ENCODE measurements at regions of chr22 and their contacts with region 1.

Region 1: DNA sequence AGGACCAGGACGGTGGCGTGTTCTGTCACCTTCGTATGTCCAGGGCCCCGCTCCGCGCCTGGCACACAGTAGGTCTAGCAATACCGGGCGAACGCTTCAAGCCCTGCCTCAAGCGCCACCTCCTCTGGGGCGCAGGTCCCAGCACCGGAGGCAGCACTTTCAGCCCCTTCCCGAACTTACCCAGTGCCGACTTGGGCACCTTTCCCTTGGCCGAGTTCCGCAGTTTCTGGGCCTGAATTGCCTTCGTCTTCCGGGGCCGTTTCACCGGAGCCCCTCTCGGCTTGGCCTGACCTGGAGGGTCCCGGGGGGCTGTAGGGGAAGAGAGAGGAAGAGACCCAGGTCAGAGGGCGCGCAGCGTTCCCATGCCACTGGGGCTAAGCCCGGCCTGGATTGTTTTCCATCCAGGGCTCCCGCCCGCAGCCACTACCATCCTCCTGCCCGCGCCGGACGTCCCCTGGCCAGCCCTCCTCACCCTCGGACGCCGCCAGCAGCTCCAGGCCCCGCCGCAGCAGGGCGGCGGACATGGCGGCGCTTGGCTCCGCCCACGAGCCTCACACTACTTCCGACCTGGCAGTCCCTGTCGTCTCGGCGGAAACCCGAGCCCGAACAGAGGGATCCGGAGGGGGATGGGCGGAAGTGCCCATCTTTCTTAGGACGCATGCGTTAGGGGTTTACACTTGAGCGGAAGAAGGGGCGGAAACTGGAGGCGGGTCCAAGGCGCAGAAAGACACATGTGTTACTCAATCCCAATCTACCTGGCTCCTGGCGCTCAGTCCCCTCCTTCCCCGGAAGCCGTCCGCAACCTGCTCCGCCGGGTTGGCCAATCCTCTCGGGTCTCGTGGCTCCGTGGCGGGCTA is at the start of gene RPS19BP1:
- DNase-seq: peak; percentile 99
- H3K4me3 Mint-ChIP-seq: peak within 1 kb of the TSS; percentile 96
- H3K27ac Mint-ChIP-seq: peak within 1 kb of the TSS; percentile 93
- H3K4me1 Mint-ChIP-seq: peaks cover 52% of the 10 kb centered on the region
- H3K27me3 Mint-ChIP-seq: no peaks in the 10 kb centered on the region
- total RNA-seq, gene RPS19BP1: 98.7 and 101 TPM in 2 replicates

Region 2: GRCh38 chr22:39319270-39320022 is 213.0 kb before region 1 on chr22 and contains the start of gene RPL3:
- intact Hi-C with region 1: loop called (anchors 1 kb)
- DNase-seq: peak; percentile 96
- H3K4me3 Mint-ChIP-seq: peak within 1 kb of the TSS; percentile 99
- H3K27ac Mint-ChIP-seq: peak within 1 kb of the TSS; percentile 99
- H3K4me1 Mint-ChIP-seq: peaks cover 42% of the 10 kb centered on the region
- H3K27me3 Mint-ChIP-seq: no peaks in the 10 kb centered on the region
- total RNA-seq, gene RPL3: 1,905 and 1,941 TPM in 2 replicates

Region 3: DNA sequence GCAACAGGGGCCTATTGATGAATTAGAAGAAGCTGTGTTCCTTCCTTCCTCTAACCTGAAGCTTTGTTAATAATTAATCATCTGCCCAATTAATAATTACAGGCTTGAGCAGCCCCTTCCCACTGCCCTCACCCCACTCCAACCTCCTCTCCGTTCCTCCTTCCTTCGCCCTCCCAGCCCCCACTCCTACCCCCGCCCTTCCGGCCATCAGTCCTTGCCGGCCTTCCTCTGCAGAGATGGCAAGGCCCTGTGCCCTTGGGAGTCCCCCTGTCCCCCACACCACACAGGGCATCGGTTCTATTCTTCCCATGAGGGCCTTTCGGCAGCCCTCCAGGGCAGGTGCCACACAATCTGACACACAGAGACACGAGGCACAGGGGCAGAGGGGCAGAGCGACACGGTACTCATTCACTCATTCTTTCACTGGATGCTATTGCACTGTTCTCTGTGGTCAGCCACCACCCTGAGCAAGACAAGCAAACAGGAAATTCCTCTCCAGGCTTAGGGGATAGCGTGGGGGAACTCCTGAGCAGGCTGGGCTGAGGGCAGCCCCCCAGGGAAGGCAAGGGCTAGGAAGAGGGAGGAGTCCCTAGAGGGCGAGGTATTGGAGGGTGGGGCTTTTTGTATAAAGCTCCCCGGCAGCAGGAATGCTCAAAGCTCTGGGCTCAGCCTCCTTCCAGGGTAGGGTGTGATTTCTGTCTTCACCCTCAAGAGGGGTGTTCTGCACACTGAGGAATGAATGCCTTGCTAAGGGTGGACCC is 60.9 kb before region 1 on chr22:
- intact Hi-C with region 1: no loop called
- DNase-seq: peak; percentile 27
- H3K4me3 Mint-ChIP-seq: peak overlapping the region; percentile 52
- H3K27ac Mint-ChIP-seq: peak overlapping the region; percentile 67
- H3K4me1 Mint-ChIP-seq: peaks cover 28% of the 10 kb centered on the region
- H3K27me3 Mint-ChIP-seq: no peaks in the 10 kb centered on the region

Region 4: GRCh38 chr22:39496131-39496838 is 36.2 kb before region 1 on chr22:
- intact Hi-C with region 1: loop called (anchors 1 kb)
- DNase-seq: peak; percentile 40
- H3K4me3 Mint-ChIP-seq: no peak overlapping the region
- H3K27ac Mint-ChIP-seq: no peak overlapping the region
- H3K4me1 Mint-ChIP-seq: peaks cover 16% of the 10 kb centered on the region
- H3K27me3 Mint-ChIP-seq: peaks cover 7% of the 10 kb centered on the region

Region 5: GRCh38 chr22:39908737-39909136 is 376.3 kb after region 1 on chr22:
- intact Hi-C with region 1: loop called (anchors 5 kb)
- DNase-seq: no peak
- H3K4me3 Mint-ChIP-seq: peak overlapping the region; percentile 92
- H3K27ac Mint-ChIP-seq: peak overlapping the region; percentile 96
- H3K4me1 Mint-ChIP-seq: peaks cover 95% of the 10 kb centered on the region
- H3K27me3 Mint-ChIP-seq: no peaks in the 10 kb centered on the region

Region 6: DNA sequence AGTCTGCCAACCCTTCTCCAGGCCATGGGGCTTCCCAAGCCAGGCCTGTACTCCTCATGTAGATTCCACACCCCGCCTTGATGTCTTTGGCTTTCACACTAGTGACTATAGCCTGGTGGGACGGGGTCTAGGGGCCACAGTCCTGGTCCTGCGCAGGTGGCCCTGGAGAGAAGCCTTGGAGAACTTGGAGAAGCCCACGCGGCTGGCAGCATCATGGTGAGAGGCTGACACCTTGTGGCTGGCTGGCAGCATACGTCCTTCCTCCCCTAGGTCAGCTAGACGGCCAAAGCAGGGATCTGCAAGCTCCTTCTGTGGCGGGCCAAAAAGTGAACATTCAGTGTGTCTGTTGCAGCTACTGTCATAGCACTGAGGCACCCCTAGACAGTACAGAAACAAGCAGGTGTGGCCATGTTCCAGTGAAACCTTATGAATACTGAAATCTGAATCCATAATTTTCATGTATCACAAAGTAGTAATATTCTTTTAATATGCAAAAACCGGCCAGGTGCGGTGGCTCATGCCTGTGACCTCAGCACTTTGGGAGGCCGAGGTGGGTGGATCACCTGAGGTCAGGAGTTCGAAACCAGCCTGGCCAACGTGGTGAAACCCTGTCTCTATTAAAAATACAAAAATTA is 504.3 kb after region 1 on chr22:
- intact Hi-C with region 1: loop called (anchors 1 kb)
- DNase-seq: peak; percentile 23
- H3K4me3 Mint-ChIP-seq: no peak overlapping the region
- H3K27ac Mint-ChIP-seq: no peak overlapping the region
- H3K4me1 Mint-ChIP-seq: no peaks in the 10 kb centered on the region
- H3K27me3 Mint-ChIP-seq: peaks cover 10% of the 10 kb centered on the region

Region 7: GRCh38 chr22:40636380-40637182 is 1104.1 kb after region 1 on chr22 and contains the start of gene MRTFA:
- intact Hi-C with region 1: loop called (anchors 2 kb)
- DNase-seq: peak; percentile 100
- H3K4me3 Mint-ChIP-seq: peak within 1 kb of the TSS; percentile 94
- H3K27ac Mint-ChIP-seq: peak within 1 kb of the TSS; percentile 94
- H3K4me1 Mint-ChIP-seq: peaks cover 27% of the 10 kb centered on the region
- H3K27me3 Mint-ChIP-seq: no peaks in the 10 kb centered on the region
- total RNA-seq, gene MRTFA: 47.4 and 47.8 TPM in 2 replicates

Measured in activated T-helper 1 cell treated with anti-CD3 and anti-CD28 coated beads, Interleukin-12 subunit alpha, Interleukin-12 subunit beta, Interleukin-2, Interleukin-4 antibody, amounts not matched to agents 30 ng/mL and 10 ng/mL and 1 ng/mL, durations not matched to agents 14 hours and 24 hours and 36 hours (primary cell).